Stomach (tissue), 19 donors: ENCODE measurements at regions of chr11 and their contacts with region 1.

Region 1: DNA sequence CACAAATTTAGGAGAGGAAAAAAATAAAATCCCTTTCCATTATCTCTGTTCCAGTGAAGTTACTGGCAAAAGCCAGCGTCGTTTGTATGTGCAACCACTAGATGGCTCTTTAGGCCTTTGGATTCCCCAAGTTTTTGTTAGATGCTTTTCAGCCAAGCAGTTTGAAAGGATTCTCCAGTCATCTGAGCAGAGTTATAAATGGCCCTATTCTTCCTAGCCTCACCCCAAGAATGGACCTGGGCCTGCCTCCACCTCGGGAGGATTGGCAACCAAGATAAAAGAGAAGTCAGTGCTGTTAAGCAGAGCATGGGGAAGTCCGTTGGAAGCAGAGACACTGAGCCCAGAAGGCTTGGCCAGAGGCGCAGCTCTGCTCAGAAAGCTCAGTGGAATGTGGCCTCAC is 15.4 kb downstream of the FAM181B start:
- DNase-seq: peak in 1 of 2 donors; percentile 74
- H3K4me3 ChIP-seq: no peak overlapping the region
- H3K27ac ChIP-seq: no peak overlapping the region
- H3K4me1 ChIP-seq: no peaks in the 10 kb centered on the region
- H3K27me3 ChIP-seq: no peaks in the 10 kb centered on the region
- CTCF ChIP-seq: peak in 5 of 7 experiments; percentile 47 to 62 (median 48)
- EP300 ChIP-seq: no peak
- POLR2A ChIP-seq: no peak

Region 2: DNA sequence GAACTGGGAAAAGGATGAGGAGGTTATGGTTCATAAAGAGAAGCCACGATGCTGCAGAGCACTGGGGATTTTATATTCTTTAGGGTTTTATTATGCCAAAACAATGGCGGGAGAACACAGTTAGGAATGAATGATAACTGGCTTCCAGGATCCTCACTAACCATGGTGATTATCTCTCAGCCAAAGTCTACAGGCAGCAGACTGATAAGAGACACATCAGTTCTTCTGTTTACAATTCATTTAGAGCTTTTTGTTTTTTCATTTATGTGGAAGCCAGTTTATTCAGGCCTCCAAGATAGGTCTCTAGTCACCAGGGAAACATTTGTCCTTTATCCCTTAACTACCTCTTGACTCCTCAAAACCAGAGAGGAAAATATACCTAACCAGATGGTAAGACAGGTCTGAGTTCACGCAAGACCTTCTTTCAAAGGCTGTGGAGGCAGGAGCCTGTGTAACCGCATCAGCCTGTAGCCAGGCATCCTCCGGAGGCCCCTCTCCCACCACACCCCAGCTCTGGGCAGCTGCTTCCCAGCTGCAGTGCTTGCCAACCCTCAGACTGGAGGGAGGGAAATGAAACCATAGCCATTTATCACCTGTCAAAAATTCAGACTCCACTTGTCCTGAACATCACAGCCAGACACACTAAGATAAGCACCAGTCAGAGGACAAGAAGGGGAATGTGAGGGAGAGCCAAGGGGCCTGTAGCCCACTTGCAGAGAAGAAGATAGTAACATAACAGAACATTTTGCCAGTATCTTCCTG is 72.6 kb after region 1 on chr11:
- intact Hi-C with region 1: no loop called
- DNase-seq: peak in 1 of 2 donors; percentile 50
- H3K4me3 ChIP-seq: no peak overlapping the region
- H3K27ac ChIP-seq: no peak overlapping the region
- H3K4me1 ChIP-seq: no peaks in the 10 kb centered on the region
- H3K27me3 ChIP-seq: no peaks in the 10 kb centered on the region
- CTCF ChIP-seq: no peak
- EP300 ChIP-seq: no peak
- POLR2A ChIP-seq: no peak

Region 3: DNA sequence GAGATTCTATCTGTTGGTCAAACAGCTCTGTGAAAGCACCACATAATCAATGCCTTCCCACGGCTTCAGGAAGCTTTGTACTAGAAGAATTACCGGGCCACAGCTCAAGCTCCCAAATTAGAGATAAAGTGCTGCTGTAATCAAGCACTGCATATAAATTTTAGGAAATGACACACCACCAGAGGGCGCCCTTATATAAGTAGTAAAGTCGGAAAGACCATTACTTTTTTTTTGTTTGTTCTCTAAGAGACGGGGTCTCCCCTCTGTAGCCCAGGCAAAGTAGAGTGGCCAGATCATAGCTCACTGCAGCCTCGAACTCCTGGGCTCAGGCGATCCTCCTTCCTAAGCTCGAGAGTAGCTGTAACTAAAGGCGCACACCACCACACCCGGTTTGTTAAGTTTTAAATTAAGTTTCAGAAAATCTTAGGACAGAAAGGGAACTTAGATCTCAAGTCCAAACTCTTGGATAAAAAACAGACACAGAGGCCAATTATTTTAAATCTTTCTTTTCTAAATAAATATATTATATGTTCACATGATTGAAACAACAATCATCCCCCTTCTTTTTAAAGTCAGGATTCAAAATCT is 149.3 kb after region 1 on chr11:
- intact Hi-C with region 1: loop called (anchors 10 kb)
- DNase-seq: peak; percentile 79 to 90
- H3K4me3 ChIP-seq: peak overlapping the region in 3 of 4 donors; percentile 8 to 15 (median 13)
- H3K27ac ChIP-seq: no peak overlapping the region
- H3K4me1 ChIP-seq: peaks cover 4 to 44% (median 24%) of the 10 kb centered on the region in 4 donors
- H3K27me3 ChIP-seq: no peaks in the 10 kb centered on the region
- CTCF ChIP-seq: peak in 5 of 7 experiments; percentile 50 to 76 (median 65)
- EP300 ChIP-seq: no peak
- POLR2A ChIP-seq: no peak

Region 4: GRCh38 chr11:83007909-83008580 is 289.7 kb after region 1 on chr11:
- intact Hi-C with region 1: no loop called
- DNase-seq: peak; percentile 73 to 82
- H3K4me3 ChIP-seq: no peak overlapping the region
- H3K27ac ChIP-seq: peak overlapping the region; percentile 34 to 76 (median 62)
- H3K4me1 ChIP-seq: peaks cover 20 to 61% (median 39%) of the 10 kb centered on the region in 4 donors
- H3K27me3 ChIP-seq: no peaks in the 10 kb centered on the region
- CTCF ChIP-seq: no peak
- EP300 ChIP-seq: no peak
- POLR2A ChIP-seq: no peak

Region 5: DNA sequence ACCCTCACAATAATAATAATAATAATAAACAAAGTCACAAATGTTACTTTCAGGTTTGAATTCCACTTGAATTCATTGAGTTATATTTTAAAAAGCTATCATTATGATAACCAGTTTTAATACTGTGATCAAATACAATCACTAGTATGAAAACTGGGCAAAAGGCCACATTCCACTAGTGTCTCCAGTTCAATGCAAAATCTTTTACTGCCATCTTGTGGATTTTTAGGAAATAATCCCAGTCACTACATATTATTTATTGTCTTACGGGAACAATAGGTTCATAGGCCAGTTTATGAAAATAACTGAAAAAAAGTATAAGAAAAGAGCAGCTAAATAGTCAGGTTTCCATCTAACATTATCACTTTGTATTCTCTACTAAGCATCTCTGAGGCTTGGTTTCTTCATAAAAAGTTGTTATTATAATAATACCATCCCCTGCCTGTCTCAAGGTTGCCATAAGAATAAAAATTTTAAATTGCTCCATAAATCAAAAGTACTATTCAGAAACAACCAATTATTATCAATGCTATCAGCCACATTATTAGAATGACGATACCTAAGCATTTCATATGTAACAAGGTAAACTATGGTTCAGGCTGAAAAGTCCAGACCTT is 1101.7 kb after region 1 on chr11:
- intact Hi-C with region 1: loop called (anchors 5 kb)
- DNase-seq: peak in 1 of 2 donors; percentile 71
- H3K4me3 ChIP-seq: no peak overlapping the region
- H3K27ac ChIP-seq: no peak overlapping the region
- H3K4me1 ChIP-seq: no peaks in the 10 kb centered on the region
- H3K27me3 ChIP-seq: no peaks in the 10 kb centered on the region
- CTCF ChIP-seq: peak in 5 of 7 experiments; percentile 32 to 71 (median 50)
- EP300 ChIP-seq: no peak
- POLR2A ChIP-seq: no peak